ENCODE measurements at regions of chr3 and their contacts with region 1.

Region 1: GRCh38 chr3:13091898-13092611 is 18.8 kb upstream of the IQSEC1 start:
- DNase-seq: peak; percentile 92
- ATAC-seq: peak; percentile 85

Region 2: DNA sequence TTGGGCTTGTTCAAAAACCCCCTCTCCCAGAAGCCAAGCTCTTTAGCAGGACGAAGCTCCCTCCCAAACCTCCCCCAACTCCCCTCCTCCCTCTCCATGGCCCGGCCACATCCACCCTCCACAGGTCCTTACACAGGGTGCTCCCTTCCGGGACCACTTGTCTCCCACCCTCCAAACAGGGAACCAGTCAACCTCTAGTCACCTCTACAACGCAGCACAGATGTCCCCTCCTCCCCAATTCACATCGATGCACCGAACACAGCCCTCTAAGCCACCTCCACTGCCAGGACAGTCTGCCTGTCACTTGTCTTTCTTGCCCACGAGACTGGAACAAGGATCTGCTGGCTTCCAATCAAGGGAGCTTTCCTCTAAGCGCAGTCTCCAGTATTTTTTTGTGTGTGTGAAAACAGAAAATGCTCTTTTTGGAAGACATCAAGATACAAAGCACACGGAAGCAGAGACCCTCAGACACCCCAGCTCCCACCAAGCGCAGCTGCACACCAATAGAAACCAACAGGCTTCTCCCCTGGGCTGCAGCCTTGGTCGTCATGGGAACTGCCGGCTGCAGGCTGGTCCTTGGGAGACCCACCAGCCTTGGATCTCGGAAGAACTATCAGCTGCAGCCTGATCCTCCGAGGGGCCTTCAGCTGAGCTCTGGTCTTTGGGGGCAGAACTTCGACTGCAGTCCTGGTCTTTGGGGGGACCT is 45.3 kb before region 1 on chr3:
- intact Hi-C with region 1: no loop called
- DNase-seq: no peak
- ATAC-seq: no peak

Region 3: DNA sequence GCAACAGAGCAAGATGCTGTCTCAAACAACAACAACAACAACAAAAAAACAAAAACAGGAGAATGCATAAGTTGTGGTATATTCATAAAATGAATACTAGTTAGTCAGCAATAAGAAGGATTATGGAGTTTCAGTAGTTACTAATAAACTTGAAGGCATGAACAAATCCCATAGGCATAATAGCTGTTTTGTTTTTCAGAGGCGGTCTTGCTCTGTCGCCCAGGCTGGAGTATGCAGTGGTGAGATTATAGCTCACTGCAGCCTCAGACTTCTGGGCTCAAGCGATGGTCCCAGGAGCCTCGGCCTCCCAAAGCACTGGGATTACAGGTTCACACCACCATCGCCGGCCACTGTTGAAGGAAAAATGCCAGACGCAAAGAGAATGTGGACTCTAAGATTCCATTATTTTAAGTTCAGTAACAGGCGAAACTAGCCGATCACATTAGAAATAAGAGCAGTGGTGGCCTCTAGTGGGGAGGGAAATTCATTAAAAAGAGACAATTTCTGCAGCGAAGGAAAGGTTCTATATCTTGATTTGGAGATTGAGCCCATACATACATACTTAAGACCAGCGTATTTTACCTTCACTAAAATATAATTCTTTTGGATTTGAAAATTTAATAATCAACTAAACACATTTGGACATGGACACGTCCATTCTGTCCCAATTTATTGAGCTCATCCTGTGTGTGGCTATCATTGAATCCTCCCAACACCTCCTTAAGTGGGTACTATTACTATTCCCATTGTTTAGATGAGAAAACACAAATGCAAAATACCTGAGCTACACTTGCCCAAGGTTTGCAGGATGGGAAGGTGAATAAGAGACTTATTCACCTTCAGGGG is 360.7 kb after region 1 on chr3:
- intact Hi-C with region 1: loop called (anchors 10 kb)
- DNase-seq: no peak
- ATAC-seq: peak; percentile 67

Region 4: DNA sequence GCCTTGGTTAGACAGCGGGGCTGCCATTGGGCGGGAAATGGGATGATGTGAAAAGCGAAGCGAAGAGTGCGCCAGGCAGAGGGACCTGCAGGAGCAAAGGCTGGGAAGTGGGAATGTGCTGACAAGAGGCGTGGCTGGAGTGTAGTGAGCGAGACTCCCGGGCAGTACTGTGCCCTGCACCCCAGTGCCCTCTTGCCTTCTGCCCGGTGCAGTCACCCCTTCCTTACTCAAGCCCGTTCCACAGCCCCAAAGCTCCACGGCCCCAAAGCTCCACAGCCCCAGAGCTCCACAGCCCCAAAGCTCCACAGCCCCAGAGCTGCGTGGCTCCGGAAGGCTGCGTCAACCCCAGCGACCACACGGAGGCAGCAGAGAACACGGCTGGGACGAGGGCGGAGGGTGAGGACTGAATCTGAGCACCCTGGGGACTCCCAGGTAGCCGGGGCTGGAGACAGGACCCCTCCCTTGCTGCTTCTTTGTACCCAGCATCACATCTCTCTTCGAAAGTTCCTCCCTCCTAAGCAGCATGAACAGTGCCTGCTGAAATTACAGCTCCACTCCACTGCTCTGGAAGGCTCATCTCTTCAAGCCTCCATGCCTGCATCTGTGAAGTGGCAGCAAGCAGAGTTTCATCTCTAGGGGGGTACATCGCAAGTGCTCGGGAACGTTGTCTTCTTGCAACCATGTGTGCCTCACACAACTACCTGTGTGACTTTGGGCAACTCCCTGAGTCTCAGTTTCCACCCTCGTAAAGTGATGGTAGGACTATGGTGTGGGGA is 565.8 kb after region 1 on chr3:
- intact Hi-C with region 1: loop called (anchors 5 kb)
- DNase-seq: peak; percentile 78
- ATAC-seq: peak; percentile 79